Activated B cell treated with CpG ODN at 0.5 μM for 24 hours (primary cell): ENCODE measurements at regions of chr4 and their contacts with region 1.

Region 1: DNA sequence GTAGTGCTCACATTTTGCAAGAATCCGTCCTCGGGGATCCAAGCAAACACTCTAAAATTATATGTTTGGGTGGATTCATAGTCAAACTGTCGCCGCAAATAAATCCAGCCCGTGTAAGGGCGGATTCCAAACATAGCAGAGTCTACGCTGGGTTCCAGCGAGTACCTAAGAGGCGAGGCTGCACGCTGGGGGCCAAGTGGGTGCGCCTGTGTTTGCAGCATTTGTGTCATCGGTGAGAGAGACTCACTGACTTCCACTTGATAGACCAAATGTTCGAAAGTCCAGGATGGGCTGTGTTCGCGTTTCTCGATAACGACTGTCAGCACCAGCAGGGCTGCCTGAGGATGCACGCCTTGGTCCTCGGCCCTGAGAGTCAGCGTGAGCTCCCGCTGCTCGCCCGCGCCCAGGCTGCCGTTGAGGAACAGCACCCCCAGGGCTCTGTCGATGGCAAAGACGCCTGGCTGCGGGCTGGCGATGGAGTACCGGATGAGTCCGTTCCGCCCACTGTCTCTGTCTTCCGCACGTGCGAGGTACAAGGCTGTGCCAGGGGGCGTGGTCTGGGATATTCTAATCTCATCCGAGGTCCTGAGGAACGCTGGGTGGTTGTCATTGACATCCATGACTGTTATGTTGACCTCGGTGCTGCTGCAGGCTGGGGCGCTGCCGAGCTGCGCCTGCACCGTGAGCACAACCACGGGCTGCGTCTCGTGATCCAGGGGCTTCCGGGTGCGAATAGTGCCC is 158.7 kb downstream of the DCHS2 start:
- DNase-seq: peak; percentile 38
- ATAC-seq: peak; percentile 90
- H3K4me3 Mint-ChIP-seq: peak overlapping the region; percentile 85
- H3K27ac Mint-ChIP-seq: peak overlapping the region; percentile 64
- H3K4me1 Mint-ChIP-seq: peaks cover 11% of the 10 kb centered on the region
- H3K27me3 Mint-ChIP-seq: peaks cover 22% of the 10 kb centered on the region
- CTCF ChIP-seq: no peak

Region 2: GRCh38 chr4:154618708-154619315 is 286.0 kb after region 1 on chr4:
- CTCF ChIA-PET with region 1: interaction called, 5 read pairs
- POLR2A ChIA-PET with region 1: no interaction called
- intact Hi-C with region 1: loop called (anchors 1 kb)
- DNase-seq: peak; percentile 19
- ATAC-seq: peak; percentile 80
- H3K4me3 Mint-ChIP-seq: no peak overlapping the region
- H3K27ac Mint-ChIP-seq: no peak overlapping the region
- H3K4me1 Mint-ChIP-seq: peaks cover 15% of the 10 kb centered on the region
- H3K27me3 Mint-ChIP-seq: peaks cover 2% of the 10 kb centered on the region
- CTCF ChIP-seq: no peak